Activated CD8-positive, alpha-beta memory T cell treated with anti-CD3 and anti-CD28 coated beads, Interleukin-2, amount 10 ng/mL, durations not matched to agents 7 days and 5 days (primary cell): ENCODE measurements at regions of chr3 and their contacts with region 1.

Region 1: DNA sequence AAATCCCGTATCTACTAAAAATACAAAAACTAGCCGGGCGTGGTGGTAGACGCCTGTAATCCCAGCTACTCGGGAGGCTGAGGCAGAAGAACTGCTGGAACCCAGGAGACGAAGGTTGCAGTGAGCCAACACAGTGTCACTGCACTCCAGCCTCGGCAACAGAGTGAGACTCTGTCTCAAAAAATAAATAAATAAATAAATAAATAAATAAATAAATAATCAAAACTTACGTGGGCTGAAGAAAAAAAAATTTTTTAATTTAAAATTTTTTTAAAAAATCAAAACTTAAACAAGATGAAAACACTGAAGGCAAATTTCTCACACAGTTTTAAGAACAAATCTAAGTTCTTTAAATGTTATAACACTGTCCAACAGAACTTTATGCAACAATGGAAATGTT is 14.4 kb downstream of the MSL2 start:
- DNase-seq: no peak
- ATAC-seq: no peak
- H3K4me3 Mint-ChIP-seq: no peak overlapping the region
- H3K27ac Mint-ChIP-seq: no peak overlapping the region
- H3K4me1 Mint-ChIP-seq: peaks cover 53% of the 10 kb centered on the region
- H3K27me3 Mint-ChIP-seq: no peaks in the 10 kb centered on the region

Region 2: DNA sequence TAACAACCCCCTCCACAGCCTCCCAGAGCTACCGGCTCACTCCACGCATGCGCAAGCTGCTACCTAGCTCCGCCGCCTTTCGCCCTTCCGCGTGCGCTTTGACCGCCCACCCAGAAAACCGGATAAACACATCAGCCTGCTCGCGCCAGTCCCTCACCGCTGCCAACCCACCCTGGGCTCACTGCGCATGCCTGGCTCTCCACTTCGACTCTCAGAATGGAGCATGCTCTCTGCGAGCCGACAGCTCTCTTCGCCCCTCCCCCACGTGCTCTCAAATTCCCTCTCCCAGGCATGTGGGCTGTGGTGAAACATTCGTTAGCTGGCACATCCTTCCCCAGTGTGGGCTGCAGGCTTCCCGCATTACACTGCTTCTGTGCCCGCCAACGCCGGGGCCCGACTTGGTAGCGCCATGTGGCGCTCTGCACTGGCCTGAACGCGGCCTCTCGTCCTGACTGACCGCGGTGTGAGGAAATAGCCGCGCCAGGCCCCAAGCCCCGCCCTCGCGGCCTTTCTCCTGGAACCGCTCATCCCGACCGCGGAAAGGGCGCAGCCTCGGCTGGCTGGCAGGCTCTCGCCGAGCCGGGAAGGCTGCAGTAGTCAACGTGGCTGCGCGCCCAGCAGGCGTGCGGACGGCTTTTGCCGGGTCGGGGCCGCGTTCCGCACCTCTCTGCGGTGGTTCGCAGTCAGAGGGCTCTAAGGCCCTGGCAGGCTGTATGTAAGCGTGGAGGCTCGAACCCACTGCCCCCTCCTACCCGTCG is 14.8 kb after region 1 on chr3:
- CTCF ChIA-PET with region 1: interaction called, 10 read pairs
- DNase-seq: peak; percentile 100
- ATAC-seq: peak; percentile 79
- H3K4me3 Mint-ChIP-seq: peak overlapping the region; percentile 98
- H3K27ac Mint-ChIP-seq: peak overlapping the region; percentile 98
- H3K4me1 Mint-ChIP-seq: peaks cover 20% of the 10 kb centered on the region
- H3K27me3 Mint-ChIP-seq: peaks cover 3% of the 10 kb centered on the region